Ovary (tissue), 10 donors: ENCODE measurements at regions of chr9 and their contacts with region 1.

Region 1: GRCh38 chr9:18173923-18174322 is 300.0 kb upstream of the ADAMTSL1 start:
- DNase-seq: no peak
- H3K4me3 ChIP-seq: no peak overlapping the region
- H3K27ac ChIP-seq: no peak overlapping the region
- H3K4me1 ChIP-seq: no peaks in the 10 kb centered on the region
- H3K27me3 ChIP-seq: no peaks in the 10 kb centered on the region
- CTCF ChIP-seq: no peak
- EP300 ChIP-seq: no peak
- POLR2A ChIP-seq: no peak

Region 2: DNA sequence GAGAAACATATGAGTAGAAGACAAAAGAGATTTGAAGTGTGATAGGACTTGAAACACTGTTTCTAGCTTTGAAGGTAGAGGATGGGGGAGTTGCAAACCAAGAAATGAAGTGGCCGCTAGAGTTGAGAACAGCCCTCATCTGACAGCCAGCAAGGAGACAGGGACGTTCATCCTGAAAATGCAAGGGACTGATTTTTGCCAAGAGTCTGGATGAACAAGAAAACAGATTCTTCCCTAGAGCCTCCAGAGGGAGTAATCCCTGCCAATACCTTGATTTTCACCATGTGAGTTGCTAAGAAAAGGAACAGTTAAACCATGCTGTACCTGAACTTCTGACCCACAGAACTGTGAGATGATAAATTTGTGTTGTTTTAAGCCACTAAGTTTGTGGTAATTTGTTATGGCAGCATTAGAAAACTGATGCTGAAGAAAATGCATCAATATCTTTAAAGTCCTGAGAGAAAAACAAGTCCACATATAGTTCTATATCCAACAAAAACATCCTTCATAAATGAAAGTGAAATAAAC is 146.1 kb after region 1 on chr9:
- intact Hi-C with region 1: no loop called
- DNase-seq: no peak
- H3K4me3 ChIP-seq: no peak overlapping the region
- H3K27ac ChIP-seq: no peak overlapping the region
- H3K4me1 ChIP-seq: no peaks in the 10 kb centered on the region
- H3K27me3 ChIP-seq: no peaks in the 10 kb centered on the region
- CTCF ChIP-seq: no peak
- EP300 ChIP-seq: no peak
- POLR2A ChIP-seq: no peak

Region 3: DNA sequence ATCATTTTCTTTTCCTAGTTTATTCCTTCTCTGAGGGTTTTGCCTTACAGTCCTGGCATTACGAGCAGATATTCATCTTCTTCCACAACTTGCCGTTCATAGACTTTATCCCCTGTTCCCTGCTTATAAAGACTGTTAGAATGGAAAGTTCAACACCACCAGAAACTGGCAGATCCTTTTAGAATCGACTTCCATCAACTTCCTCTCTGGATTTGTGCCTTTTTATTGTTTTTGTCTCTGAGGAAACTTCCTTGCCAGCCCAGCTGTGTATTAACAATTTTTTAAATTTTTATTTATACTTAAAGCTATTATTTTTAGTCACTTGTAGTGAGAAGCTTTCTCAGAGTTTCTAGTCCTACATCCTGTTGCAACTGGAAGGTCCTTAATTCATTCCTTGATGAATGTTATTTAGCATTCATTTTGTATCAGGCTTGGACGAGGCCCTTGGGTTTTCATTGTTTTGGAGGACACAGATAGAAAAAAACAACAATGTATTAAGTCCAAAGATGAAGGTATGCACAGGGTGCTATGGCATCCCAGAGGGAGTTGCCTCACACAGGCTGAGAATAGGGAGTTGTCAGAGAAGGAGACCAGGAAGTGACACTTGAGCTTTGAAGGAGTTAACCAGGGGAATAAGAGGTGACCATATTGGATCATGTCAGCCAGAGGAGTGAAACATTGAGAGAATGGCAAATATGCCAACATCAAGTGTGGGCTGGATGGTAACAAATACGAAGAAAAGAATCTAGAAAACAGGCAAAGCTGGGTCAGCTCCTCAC is 381.4 kb after region 1 on chr9:
- intact Hi-C with region 1: loop called in 1 of 4 experiments (anchors 10 kb)
- DNase-seq: no peak
- H3K4me3 ChIP-seq: no peak overlapping the region
- H3K27ac ChIP-seq: no peak overlapping the region
- H3K4me1 ChIP-seq: no peaks in the 10 kb centered on the region
- H3K27me3 ChIP-seq: no peaks in the 10 kb centered on the region
- CTCF ChIP-seq: no peak
- EP300 ChIP-seq: no peak
- POLR2A ChIP-seq: no peak